Caco-2 (cell line): ENCODE measurements at regions of chr6 and their contacts with region 1.

Region 1: DNA sequence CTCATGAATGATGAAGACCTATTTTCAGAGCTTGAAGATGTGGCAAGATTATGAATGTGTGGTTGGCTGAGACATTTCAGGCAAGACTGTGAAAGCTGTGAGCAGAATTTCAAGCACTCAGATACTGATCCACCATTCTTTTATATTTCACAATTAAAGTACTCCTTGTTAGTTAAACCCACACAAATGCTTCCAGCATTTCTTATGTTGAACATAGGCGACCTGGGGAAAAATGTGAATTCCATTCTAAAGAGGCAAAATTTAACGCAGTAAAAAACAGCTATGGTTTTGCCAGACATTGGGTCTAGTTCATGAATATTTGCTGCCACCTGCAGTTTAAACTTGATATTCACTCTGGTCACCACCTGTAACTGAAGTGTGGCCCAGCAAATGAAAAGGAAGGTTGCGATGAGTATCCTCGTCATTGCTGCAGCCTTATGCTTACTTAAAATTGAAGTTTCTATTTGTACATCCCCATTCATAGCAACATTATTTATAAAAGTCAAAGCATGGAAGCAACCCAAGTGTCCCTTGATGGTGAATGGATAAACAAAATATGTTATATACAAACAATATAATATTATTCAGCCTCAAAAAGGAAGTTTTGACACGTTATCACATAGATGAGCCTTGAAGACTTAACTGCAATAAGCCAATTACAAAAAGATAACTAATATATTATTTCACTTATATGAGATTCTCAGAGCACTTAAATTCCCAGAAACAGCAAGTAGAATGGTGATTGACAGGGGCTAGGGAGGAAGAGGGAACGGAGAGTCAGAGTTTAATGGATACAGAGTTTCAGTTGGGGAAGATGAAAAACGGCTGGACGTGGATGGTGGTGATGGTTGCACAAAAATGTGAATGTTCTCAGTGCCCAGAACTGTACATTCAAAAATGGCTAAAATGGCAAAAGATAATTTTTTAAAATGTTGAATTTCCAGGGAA is 32.4 kb upstream of the FAM184A start:
- DNase-seq: peak; percentile 37 to 65
- H3K4me3 ChIP-seq: no peak overlapping the region
- H3K4me3 Mint-ChIP-seq: no peak overlapping the region
- H3K27ac Mint-ChIP-seq: no peak overlapping the region
- H3K4me1 ChIP-seq: no peaks in the 10 kb centered on the region
- H3K4me1 Mint-ChIP-seq: no peaks in the 10 kb centered on the region
- H3K27me3 ChIP-seq: no peaks in the 10 kb centered on the region
- H3K27me3 Mint-ChIP-seq: no peaks in the 10 kb centered on the region
- CTCF ChIP-seq: peak; percentile 52 to 61

Region 2: GRCh38 chr6:118800394-118801071 is 310.3 kb before region 1 on chr6:
- CTCF ChIA-PET with region 1: no interaction called
- POLR2A ChIA-PET with region 1: no interaction called
- intact Hi-C with region 1: loop called (anchors 1 kb)
- DNase-seq: peak; percentile 73 to 83
- H3K4me3 ChIP-seq: no peak overlapping the region
- H3K4me3 Mint-ChIP-seq: peak overlapping the region; percentile 16
- H3K27ac Mint-ChIP-seq: no peak overlapping the region
- H3K4me1 ChIP-seq: 0 out of 2 replicates have a peak, but pooled peaks cover 3% of the 10 kb centered on the region
- H3K4me1 Mint-ChIP-seq: peaks cover 18% of the 10 kb centered on the region
- H3K27me3 ChIP-seq: no peaks in the 10 kb centered on the region
- H3K27me3 Mint-ChIP-seq: no peaks in the 10 kb centered on the region
- CTCF ChIP-seq: peak; percentile 74 to 85

Region 3: DNA sequence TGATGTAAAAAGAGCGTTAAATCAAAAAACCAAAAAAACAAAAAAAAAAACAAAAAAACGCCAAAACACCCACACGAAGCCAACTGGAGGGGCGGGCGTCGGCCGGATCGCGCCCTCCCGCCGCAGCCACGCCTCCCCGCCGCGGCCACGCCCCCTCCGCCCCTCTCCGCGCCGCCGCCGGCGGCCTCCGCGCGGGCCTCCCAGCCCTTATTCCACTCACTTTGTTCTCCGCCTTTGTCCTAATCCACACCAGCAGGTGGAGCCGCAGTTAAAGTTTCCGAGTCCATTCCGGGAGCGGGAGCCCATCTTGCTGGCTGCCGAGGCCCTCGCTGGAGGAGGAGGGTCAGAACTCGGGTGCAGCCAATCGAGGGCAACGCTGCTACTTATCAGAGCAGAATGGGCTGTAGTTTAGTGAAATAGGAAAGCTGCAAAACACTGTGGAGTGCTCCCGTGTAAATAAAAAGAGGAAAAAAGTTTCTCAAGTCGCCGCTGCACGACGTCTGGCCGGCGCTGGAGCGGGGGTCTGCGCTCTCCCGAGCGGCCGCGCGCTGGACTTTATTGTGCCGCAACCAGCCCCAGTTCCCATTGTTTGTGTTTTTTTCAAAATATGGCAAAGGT is 217.0 kb before region 1 on chr6 and contains the start of gene ASF1A:
- CTCF ChIA-PET with region 1: interaction called, 4 read pairs
- POLR2A ChIA-PET with region 1: no interaction called
- intact Hi-C with region 1: loop called (anchors 2 kb)
- DNase-seq: peak; percentile 97 to 98
- H3K4me3 ChIP-seq: peak within 1 kb of the TSS; percentile 95
- H3K4me3 Mint-ChIP-seq: peak within 1 kb of the TSS; percentile 81
- H3K27ac Mint-ChIP-seq: peak within 1 kb of the TSS; percentile 98
- H3K4me1 ChIP-seq: peaks cover 6% of the 10 kb centered on the region; the same call in 1 of the 2 replicates
- H3K4me1 Mint-ChIP-seq: no peaks in the 10 kb centered on the region
- H3K27me3 ChIP-seq: no peaks in the 10 kb centered on the region
- H3K27me3 Mint-ChIP-seq: no peaks in the 10 kb centered on the region
- CTCF ChIP-seq: peak; percentile 42 to 67
- total RNA-seq, gene ASF1A: 21.9 and 22.5 TPM in 2 replicates

Region 4: DNA sequence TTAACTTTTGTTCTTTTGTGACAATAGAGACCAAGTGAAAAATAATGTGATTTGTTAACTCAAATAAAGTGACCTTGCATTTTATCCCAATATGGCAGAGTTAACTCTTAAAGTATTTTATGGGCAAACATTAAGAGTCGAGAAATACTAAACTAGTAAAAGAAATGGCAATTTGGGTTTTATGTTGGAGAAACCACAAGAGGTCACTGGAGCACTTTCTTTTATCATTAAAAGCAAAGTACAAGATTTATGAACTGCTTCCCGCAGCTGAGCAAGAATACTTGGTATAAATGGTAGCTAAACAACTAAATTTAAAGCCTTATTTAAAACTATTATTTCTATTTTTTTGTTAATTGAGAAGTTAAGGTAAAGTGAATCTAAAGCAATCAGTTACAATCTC is 142.5 kb before region 1 on chr6:
- CTCF ChIA-PET with region 1: interaction called, 19 read pairs
- POLR2A ChIA-PET with region 1: no interaction called
- intact Hi-C with region 1: loop called (anchors 1 kb)
- DNase-seq: peak in 1 of 2 experiments; percentile 12
- H3K4me3 ChIP-seq: no peak overlapping the region
- H3K4me3 Mint-ChIP-seq: no peak overlapping the region
- H3K27ac Mint-ChIP-seq: no peak overlapping the region
- H3K4me1 ChIP-seq: 0 out of 2 replicates have a peak, but pooled peaks cover 7% of the 10 kb centered on the region
- H3K4me1 Mint-ChIP-seq: no peaks in the 10 kb centered on the region
- H3K27me3 ChIP-seq: no peaks in the 10 kb centered on the region
- H3K27me3 Mint-ChIP-seq: no peaks in the 10 kb centered on the region
- CTCF ChIP-seq: peak; percentile 29 to 35

Region 5: DNA sequence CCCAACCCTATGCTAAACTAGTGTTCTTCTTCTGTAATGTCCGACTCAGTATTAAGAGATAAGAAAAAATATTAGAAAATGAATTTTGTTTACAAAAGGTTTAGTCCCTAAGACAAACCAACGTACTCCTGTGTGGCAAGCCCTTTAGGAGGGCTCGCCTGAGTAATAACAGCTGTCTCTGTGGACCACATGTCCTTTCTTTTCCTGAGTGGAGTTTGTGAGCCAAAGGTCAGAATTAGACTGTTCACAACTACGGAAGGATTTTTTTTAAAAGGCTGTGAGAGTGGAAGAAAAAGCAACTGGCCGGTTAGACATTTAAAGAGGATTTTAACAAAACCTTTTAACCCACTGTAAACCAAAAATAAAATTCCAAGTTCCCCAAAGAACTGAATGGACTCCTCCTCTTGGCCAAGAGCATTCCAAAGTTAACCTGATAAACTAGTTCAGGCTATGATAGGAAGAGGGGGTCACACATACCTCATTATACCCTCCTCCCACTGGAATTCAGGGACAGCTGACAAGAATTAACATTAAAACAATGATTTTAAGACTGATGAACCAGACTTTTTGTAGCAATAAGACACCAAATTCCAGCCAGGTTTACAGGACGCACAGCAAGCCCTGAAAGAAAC is 75.9 kb before region 1 on chr6:
- CTCF ChIA-PET with region 1: no interaction called
- POLR2A ChIA-PET with region 1: no interaction called
- intact Hi-C with region 1: loop called (anchors 5 kb)
- DNase-seq: peak in 1 of 2 experiments; percentile 25
- H3K4me3 ChIP-seq: 0 out of 2 replicates have a peak overlapping the region, but pooled peaks have one; percentile 7
- H3K4me3 Mint-ChIP-seq: peak overlapping the region; percentile 64
- H3K27ac Mint-ChIP-seq: peak overlapping the region; percentile 48
- H3K4me1 ChIP-seq: peaks cover 46% of the 10 kb centered on the region
- H3K4me1 Mint-ChIP-seq: peaks cover 33% of the 10 kb centered on the region
- H3K27me3 ChIP-seq: no peaks in the 10 kb centered on the region
- H3K27me3 Mint-ChIP-seq: no peaks in the 10 kb centered on the region
- CTCF ChIP-seq: no peak

Region 6: GRCh38 chr6:119078376-119079282 is 32.2 kb before region 1 on chr6 and contains the start of gene FAM184A:
- CTCF ChIA-PET with region 1: interaction called, 8 read pairs
- POLR2A ChIA-PET with region 1: no interaction called
- intact Hi-C with region 1: loop called (anchors 1 kb)
- DNase-seq: peak; percentile 74 to 86
- H3K4me3 ChIP-seq: peak within 1 kb of the TSS; percentile 93
- H3K4me3 Mint-ChIP-seq: peak within 1 kb of the TSS; percentile 89
- H3K27ac Mint-ChIP-seq: peak within 1 kb of the TSS; percentile 82
- H3K4me1 ChIP-seq: peaks cover 10% of the 10 kb centered on the region; the same call in 1 of the 2 replicates
- H3K4me1 Mint-ChIP-seq: peaks cover 7% of the 10 kb centered on the region
- H3K27me3 ChIP-seq: no peaks in the 10 kb centered on the region
- H3K27me3 Mint-ChIP-seq: no peaks in the 10 kb centered on the region
- CTCF ChIP-seq: peak; percentile 23 to 64
- total RNA-seq, gene FAM184A: 10.8 and 11.2 TPM in 2 replicates

Region 7: DNA sequence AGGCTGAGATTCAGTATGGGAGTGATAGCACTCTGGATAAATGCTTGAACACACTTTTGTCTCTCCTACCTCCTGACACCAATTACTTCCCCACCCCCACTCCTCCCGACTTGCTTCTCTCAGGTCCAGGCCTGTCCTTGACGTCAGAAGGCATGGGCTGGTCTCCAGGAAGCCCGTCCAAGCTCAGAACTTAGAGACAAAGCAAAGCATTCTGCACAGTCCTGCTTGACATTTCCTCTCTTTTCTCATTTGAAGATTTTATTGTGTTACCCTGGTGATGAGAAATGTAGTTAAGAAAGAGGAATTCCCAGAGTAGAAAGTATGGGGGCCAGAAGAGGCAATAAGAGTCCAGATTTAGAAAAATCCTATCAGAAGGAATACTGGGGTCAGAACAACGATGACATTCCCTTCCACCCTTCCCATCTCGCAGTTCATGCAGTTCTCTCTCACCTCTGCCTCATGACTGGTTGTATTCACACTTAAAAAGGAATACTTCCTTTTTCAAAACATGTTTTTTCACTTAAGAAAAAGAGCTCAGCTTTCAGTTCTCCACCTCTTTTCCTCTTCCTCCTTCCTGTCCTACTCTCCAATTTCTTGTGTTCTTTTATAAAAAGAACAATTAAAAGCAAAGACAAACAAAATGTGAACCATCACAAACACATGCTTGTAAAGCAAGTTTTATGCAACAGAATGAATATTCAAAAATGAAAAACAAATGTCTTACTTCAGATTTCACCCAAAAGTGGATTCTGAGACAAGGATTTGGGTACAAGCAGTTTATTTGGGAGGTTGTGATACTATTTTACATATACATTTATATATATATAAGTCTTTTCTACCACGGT is 13.9 kb before region 1 on chr6:
- CTCF ChIA-PET with region 1: interaction called, 10 read pairs
- POLR2A ChIA-PET with region 1: no interaction called
- intact Hi-C with region 1: no loop called
- DNase-seq: no peak
- H3K4me3 ChIP-seq: no peak overlapping the region
- H3K4me3 Mint-ChIP-seq: no peak overlapping the region
- H3K27ac Mint-ChIP-seq: no peak overlapping the region
- H3K4me1 ChIP-seq: no peaks in the 10 kb centered on the region
- H3K4me1 Mint-ChIP-seq: no peaks in the 10 kb centered on the region
- H3K27me3 ChIP-seq: no peaks in the 10 kb centered on the region
- H3K27me3 Mint-ChIP-seq: peaks cover 3% of the 10 kb centered on the region
- CTCF ChIP-seq: no peak